ENCODE measurements at regions of chr13 and their contacts with region 1.

Region 1: DNA sequence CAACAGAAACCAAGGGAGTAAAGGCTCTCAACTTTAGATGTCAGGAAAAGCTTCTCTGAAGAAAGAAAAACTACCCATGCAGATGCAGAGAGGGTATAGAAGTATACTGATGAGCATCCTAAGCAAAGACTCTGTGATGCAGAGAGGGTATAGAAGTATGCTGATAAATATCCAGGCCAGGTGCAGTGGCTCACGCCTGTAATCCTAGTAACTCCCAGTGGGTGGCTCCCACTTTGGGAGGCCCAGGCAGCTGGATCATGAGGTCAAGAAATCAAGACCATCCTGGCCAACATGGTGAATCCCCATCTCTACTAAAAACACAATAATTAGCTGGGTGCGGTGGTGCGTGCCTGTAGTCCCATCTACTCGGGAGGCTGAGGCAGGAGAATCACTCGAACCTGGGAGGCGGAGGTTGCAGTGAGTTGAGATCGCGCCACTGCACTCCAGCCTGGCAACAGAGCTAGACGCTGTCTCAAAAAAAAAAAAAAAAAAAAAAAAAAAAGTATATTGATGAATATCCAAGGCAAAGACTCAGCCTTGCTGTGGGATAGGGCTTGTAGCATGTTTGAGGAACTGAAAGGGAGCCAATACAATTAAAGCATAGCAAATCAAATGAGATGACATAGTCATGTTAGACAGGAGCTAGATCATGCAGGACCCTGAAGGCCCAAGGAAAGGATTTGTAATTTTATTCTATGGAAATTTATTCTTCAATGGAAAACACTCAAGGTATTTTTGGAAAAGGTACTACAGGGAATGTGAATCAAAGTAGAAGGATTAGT is 14.9 kb downstream of the UBL3 start:
- DNase-seq: no peak
- ATAC-seq: peak in 2 of 4 donors; percentile 32 to 37
- H3K4me3 ChIP-seq: no peak overlapping the region
- H3K27ac ChIP-seq: no peak overlapping the region
- H3K4me1 ChIP-seq: peaks cover 5 to 18% (median 6%) of the 10 kb centered on the region in 3 donors
- H3K27me3 ChIP-seq: peaks cover 0 to 2% (median 0%) of the 10 kb centered on the region in 4 donors
- CTCF ChIP-seq: no peak

Region 2: GRCh38 chr13:29782798-29783197 is 52.7 kb before region 1 on chr13:
- intact Hi-C with region 1: loop called in 1 of 3 experiments (anchors 10 kb)
- DNase-seq: no peak
- ATAC-seq: no peak
- H3K4me3 ChIP-seq: no peak overlapping the region
- H3K27ac ChIP-seq: no peak overlapping the region
- H3K4me1 ChIP-seq: peaks cover 8 to 33% (median 27%) of the 10 kb centered on the region in 3 donors
- H3K27me3 ChIP-seq: no peaks in the 10 kb centered on the region
- CTCF ChIP-seq: no peak

Measured in pancreas (tissue), 10 donors.